Prostate gland (tissue), 2 donors: ENCODE measurements at regions of chr19 and their contacts with region 1.

Region 1: GRCh38 chr19:4870025-4870700 is 2.7 kb upstream of the PLIN3 start:
- DNase-seq: no peak
- H3K4me3 ChIP-seq: no peak overlapping the region
- H3K27ac ChIP-seq: no peak overlapping the region
- H3K4me1 ChIP-seq: no peaks in the 10 kb centered on the region
- H3K27me3 ChIP-seq: no peaks in the 10 kb centered on the region
- CTCF ChIP-seq: no peak
- POLR2A ChIP-seq: no peak

Region 2: DNA sequence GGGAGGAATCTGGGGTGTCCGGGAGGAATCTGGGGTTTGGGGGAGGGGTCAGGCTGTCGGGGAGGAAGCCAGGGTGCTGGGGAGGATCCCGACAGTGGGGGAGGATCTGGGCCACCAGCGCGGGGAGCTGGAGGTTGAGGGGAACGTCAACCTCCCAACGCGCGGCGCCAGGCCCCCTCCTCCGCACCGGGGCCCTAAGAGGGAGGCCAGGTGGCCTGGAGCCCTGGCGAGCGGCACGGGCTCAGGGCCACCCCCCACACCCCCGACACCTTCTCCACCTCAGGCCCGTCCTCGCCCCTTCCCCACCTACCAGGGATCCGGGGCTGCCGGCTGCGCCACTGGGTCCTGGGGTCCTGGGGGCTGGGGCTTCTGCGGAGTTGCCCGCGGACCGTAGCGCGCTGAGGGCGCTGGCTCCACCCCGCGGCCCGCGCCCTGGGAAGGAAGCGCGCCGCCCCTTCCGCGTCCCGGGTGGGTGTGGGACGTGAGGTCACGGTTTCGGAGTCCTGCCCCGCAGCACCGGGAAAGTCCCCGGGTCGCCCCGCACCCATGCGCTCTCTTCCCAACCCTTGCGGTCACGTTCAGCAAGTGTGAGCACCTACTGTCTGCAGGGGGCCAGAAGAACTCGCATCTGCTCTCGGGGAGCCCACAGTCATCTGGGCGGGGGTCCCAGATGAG is 38.7 kb before region 1 on chr19 and contains the start of gene TICAM1:
- intact Hi-C with region 1: no loop called
- DNase-seq: peak; percentile 49
- H3K4me3 ChIP-seq: peak within 1 kb of the TSS; percentile 78 to 86
- H3K27ac ChIP-seq: peak within 1 kb of the TSS; percentile 82 to 92
- H3K4me1 ChIP-seq: peaks cover 2% of the 10 kb centered on the region
- H3K27me3 ChIP-seq: no peaks in the 10 kb centered on the region
- CTCF ChIP-seq: no peak
- POLR2A ChIP-seq: peak; percentile 94
- total RNA-seq, gene TICAM1: 8.3 to 9.1 TPM

Region 3: DNA sequence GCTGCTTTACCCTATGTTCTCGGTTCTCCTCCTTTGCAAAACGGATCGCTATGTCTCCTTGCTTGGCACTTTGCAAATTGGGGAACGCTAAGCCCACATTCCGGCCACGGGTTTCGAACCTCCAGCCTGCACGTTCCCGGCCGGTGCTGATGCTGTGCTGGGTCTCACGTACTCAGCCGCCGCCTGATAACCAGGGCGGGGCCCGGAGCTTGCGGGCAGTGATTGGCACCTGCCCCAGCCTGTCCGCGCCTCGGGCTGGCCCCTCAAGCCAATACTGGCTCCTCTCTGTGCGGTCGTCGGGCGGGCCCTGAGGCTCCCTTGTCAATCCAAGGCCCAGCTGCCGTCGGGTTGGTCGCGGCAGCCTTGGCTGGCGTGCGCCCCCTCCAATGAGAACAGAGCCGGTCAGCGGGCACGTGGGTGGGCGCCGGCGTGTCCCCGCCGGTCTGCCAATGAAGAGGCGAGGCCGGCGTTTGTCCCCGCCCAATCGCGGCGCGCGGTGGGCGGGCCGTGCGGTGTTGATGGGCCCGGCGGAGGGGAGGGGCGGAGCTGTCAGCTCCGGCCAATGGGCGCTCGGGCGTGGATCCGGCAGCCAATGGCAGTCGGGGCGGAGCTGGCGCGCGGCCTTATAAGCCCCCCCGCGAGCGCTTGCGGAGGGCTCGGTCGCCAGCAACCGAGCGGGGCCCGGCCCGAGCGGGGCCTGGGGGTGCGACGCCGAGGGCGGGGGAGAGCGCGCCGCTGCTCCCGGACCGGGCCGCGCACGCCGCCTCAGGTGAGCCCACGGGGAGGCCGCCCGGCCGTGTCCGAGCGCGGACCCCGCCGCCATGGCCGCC is 98.5 kb after region 1 on chr19 and contains the start of gene KDM4B:
- intact Hi-C with region 1: loop called (anchors 5 kb)
- DNase-seq: peak; percentile 99
- H3K4me3 ChIP-seq: peak within 1 kb of the TSS; percentile 67 to 76
- H3K27ac ChIP-seq: peak within 1 kb of the TSS; percentile 90 to 92
- H3K4me1 ChIP-seq: peaks cover 19% of the 10 kb centered on the region
- H3K27me3 ChIP-seq: no peaks in the 10 kb centered on the region
- CTCF ChIP-seq: peak in 1 of 4 experiments; percentile 10
- POLR2A ChIP-seq: peak; percentile 95
- total RNA-seq, gene KDM4B: 74.6 to 136 TPM

Region 4: GRCh38 chr19:5031231-5032100 is 161.3 kb after region 1 on chr19:
- intact Hi-C with region 1: loop called (anchors 5 kb)
- DNase-seq: peak; percentile 79
- H3K4me3 ChIP-seq: no peak overlapping the region
- H3K27ac ChIP-seq: peak overlapping the region in 1 of 2 donors; percentile 33
- H3K4me1 ChIP-seq: peaks cover 27% of the 10 kb centered on the region
- H3K27me3 ChIP-seq: no peaks in the 10 kb centered on the region
- CTCF ChIP-seq: peak; percentile 90 to 97 (median 94)
- POLR2A ChIP-seq: no peak